AG04450 (cell line): ENCODE measurements at regions of chr5 and their contacts with region 1.

Region 1: DNA sequence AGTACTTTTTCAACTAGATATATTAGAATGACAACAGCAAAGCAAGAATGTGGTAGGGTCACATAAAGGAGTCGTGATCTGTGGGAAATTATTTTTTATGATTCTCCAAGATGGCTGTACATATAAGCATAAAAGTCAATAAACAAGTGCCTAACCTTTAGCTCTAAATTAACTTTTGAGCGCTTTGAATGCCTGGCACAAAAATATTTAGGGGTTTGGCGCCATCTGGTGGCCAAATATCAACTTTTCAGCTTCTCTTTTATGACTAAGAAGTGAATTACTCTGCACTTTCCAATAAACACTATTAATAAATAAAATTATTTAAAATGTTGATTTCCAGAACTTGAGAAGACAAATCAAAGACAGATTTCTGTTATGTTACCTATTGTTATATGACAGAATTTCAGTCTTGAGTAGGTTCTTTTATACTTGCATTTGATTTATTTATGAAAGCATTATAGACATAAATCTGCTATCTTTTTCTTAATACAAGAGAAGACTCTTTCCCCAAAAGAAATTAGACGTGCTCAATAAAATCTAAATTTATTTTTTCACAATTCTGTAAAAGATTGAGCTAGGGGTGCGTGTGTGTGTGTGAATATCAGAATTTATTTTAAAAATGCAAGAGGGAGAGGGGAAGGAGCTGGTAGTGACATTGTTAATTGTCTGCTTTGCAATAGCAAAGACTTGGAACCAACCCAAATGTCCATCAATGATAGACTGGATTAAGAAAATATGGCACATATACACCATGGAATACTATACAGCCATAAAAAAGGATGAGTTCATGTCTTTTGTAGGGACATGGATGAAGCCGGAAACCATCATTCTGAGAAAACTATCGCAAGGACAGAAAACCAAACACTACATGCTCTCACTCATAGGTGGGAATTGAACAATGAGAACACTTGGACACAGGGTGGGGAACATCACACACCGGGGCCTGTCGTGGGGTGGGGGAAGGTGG is 36.7 kb upstream of the ARRDC3 start:
- DNase-seq: peak; percentile 26
- H3K4me3 ChIP-seq: no peak overlapping the region
- H3K27ac ChIP-seq: no peak overlapping the region
- H3K27me3 ChIP-seq: no peaks in the 10 kb centered on the region
- CTCF ChIP-seq: peak; percentile 66

Region 2: GRCh38 chr5:90802474-90803317 is 617.2 kb before region 1 on chr5:
- CTCF ChIA-PET with region 1: interaction called, 74 read pairs
- POLR2A ChIA-PET with region 1: no interaction called
- DNase-seq: no peak
- H3K4me3 ChIP-seq: no peak overlapping the region
- H3K27ac ChIP-seq: no peak overlapping the region
- H3K27me3 ChIP-seq: no peaks in the 10 kb centered on the region
- CTCF ChIP-seq: peak; percentile 77

Region 3: GRCh38 chr5:90873033-90873517 is 546.8 kb before region 1 on chr5:
- CTCF ChIA-PET with region 1: interaction called, 218 read pairs
- POLR2A ChIA-PET with region 1: no interaction called
- DNase-seq: no peak
- H3K4me3 ChIP-seq: no peak overlapping the region
- H3K27ac ChIP-seq: no peak overlapping the region
- H3K27me3 ChIP-seq: no peaks in the 10 kb centered on the region
- CTCF ChIP-seq: no peak

Region 4: GRCh38 chr5:91095313-91095712 is 324.5 kb before region 1 on chr5:
- CTCF ChIA-PET with region 1: interaction called, 11 read pairs
- POLR2A ChIA-PET with region 1: no interaction called
- DNase-seq: no peak
- H3K4me3 ChIP-seq: no peak overlapping the region
- H3K27ac ChIP-seq: no peak overlapping the region
- H3K27me3 ChIP-seq: peaks cover 2% of the 10 kb centered on the region
- CTCF ChIP-seq: no peak

Region 5: DNA sequence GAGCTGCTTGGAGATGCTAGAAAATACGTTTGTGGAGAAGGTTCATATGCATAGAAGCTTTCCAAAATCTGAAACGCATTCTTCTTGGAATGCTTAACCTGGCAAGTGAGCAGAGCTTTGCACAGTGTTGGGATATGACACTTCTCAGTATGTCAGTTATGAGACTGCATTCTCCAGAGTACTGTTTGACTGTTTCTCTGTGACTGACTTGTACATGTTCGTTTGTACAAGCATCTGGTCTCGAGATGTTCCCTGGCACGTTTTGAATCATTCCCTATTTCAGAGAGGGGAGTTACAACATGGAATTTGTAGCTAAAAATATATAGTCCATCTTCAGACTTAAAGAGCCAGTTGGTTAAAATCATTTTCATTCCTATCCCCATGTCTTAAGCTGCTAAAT is 309.2 kb before region 1 on chr5:
- CTCF ChIA-PET with region 1: interaction called, 10 read pairs
- POLR2A ChIA-PET with region 1: no interaction called
- DNase-seq: no peak
- H3K4me3 ChIP-seq: no peak overlapping the region
- H3K27ac ChIP-seq: no peak overlapping the region
- H3K27me3 ChIP-seq: no peaks in the 10 kb centered on the region
- CTCF ChIP-seq: no peak

Region 6: GRCh38 chr5:91408710-91409109 is 11.1 kb before region 1 on chr5:
- CTCF ChIA-PET with region 1: interaction called, 38 read pairs
- POLR2A ChIA-PET with region 1: no interaction called
- DNase-seq: no peak
- H3K4me3 ChIP-seq: no peak overlapping the region
- H3K27ac ChIP-seq: no peak overlapping the region
- H3K27me3 ChIP-seq: no peaks in the 10 kb centered on the region
- CTCF ChIP-seq: no peak